ENCODE measurements at regions of chr3 and their contacts with region 1.

Region 1: DNA sequence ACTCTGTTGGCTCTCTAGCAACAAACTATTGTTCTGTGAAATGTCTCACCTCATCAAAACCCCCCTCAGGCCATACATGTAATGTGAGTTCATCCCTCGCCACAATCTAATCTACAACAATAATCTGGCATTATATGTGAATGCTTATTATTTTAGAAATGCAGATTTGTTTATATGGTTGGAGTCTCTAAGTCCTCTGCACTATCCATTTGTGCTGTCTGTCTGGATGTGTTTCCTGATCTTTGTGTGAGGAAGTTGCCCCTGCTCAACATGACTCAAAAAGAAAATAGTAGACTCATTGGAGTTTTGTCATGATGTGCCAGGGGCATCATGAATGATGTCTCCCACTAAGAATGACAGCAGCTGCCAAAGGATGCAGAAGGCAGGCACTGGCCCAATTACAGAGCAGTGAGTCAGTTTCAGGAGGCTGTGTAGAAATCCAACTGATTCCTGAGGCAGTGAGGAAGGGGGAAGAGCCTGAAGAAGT is 161.6 kb upstream of the PDZRN3 start:
- DNase-seq: peak in 4 of 10 donors; percentile 19 to 59 (median 30)
- H3K4me3 ChIP-seq: no peak overlapping the region
- H3K27ac ChIP-seq: peak overlapping the region in 18 of 59 donors; percentile 2 to 50 (median 21)
- H3K27me3 ChIP-seq: no peaks in the 10 kb centered on the region
- CTCF ChIP-seq: no peak

Region 2: GRCh38 chr3:73848173-73848906 is 62.0 kb after region 1 on chr3:
- intact Hi-C with region 1: loop called in 1 of 2 experiments (anchors 10 kb)
- DNase-seq: no peak
- H3K4me3 ChIP-seq: no peak overlapping the region
- H3K27ac ChIP-seq: no peak overlapping the region
- H3K27me3 ChIP-seq: no peaks in the 10 kb centered on the region
- CTCF ChIP-seq: peak; percentile 59 to 91 (median 77)

Measured in dorsolateral prefrontal cortex (tissue), 120 donors.